ENCODE measurements at regions of chr3 and their contacts with region 1.

Region 1: DNA sequence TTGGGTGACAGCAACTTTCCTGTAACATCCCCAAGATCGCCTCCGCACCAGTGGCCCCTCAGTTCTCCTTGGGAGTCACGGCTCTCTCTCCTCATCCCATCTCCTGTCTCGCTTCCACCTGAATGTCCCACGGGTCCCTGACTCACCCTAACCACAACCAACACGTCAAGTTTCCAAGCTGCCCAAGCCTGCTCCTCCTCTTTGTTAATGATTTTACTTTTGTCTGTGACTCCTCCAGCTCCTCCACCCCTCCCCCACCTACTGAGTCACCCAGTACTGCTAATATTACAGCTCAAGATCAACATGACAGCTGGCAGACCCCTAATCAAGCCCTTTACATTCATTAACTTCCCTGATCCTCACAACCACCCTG is 39.3 kb downstream of the BDH1 start:
- DNase-seq: no peak
- ATAC-seq: no peak
- H3K4me3 ChIP-seq: no peak overlapping the region
- H3K27ac ChIP-seq: no peak overlapping the region
- H3K4me1 ChIP-seq: peaks cover 0 to 8% (median 0%) of the 10 kb centered on the region in 9 donors
- H3K27me3 ChIP-seq: no peaks in the 10 kb centered on the region
- CTCF ChIP-seq: no peak

Region 2: DNA sequence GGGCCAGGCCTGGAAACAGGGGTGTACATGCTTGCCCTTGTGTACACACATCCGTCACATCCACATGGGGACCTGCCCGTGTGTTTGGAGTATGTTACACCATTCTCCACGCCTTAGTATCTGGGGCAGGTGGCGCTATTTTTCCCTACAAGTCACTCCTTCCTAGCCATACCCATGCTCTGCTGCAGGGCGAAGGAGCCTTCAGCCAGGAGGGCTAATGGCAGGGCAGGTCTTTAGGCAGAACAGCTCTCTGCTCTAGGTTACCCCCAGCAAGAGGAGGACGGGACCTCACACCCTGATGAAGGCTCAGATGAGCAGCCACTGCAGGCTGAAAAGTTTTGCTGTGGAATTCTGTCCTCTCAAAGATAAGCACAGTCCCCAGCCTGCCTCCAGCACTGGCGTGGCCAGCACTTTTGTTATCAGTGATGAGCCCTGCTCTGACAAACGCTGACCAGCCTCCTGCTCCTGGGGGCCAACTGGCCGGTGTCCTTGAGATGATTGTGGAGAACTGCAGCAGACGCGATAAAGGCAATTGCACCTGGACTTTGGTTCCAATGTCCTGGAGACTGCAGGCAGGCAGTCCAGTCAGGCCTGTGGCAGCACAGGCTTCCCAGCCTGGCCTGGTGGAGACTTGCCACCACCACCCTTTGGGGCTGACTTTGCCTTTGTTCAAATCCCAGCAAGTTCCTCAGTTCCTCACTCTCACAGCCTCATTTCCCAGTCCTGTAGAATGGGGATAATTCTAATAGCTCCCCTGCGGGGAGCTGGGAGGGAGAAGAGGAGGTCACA is 528.1 kb before region 1 on chr3:
- intact Hi-C with region 1: loop called in 1 of 10 experiments (anchors 10 kb)
- DNase-seq: no peak
- ATAC-seq: peak in 7 of 8 donors; percentile 34 to 81 (median 41)
- H3K4me3 ChIP-seq: no peak overlapping the region
- H3K27ac ChIP-seq: no peak overlapping the region
- H3K4me1 ChIP-seq: peaks cover 0 to 19% (median 0%) of the 10 kb centered on the region in 9 donors
- H3K27me3 ChIP-seq: peaks cover 0 to 5% (median 0%) of the 10 kb centered on the region in 7 donors
- CTCF ChIP-seq: peak in 1 of 9 donors; percentile 4

Region 3: GRCh38 chr3:197428117-197428801 is 88.2 kb before region 1 on chr3:
- intact Hi-C with region 1: no loop called
- DNase-seq: peak; percentile 35 to 45
- ATAC-seq: peak; percentile 40 to 89 (median 66)
- H3K4me3 ChIP-seq: no peak overlapping the region
- H3K27ac ChIP-seq: peak overlapping the region in 5 of 10 donors; percentile 8 to 64 (median 49)
- H3K4me1 ChIP-seq: peaks cover 4 to 51% (median 32%) of the 10 kb centered on the region in 9 donors
- H3K27me3 ChIP-seq: no peaks in the 10 kb centered on the region
- CTCF ChIP-seq: no peak